Pancreas (tissue), 10 donors: ENCODE measurements at regions of chr20 and their contacts with region 1.

Region 1: GRCh38 chr20:45318948-45319347 is 10.8 kb upstream of the MATN4 start:
- DNase-seq: no peak
- ATAC-seq: peak in 3 of 4 donors; percentile 1 to 16 (median 4)
- H3K4me3 ChIP-seq: no peak overlapping the region
- H3K27ac ChIP-seq: peak overlapping the region in 2 of 4 donors; percentile 6 to 31
- H3K4me1 ChIP-seq: peaks cover 0 to 11% (median 0%) of the 10 kb centered on the region in 3 donors
- H3K27me3 ChIP-seq: no peaks in the 10 kb centered on the region
- CTCF ChIP-seq: no peak

Region 2: GRCh38 chr20:45362804-45363610 is 44.1 kb after region 1 on chr20 and contains the start of gene SYS1:
- intact Hi-C with region 1: no loop called
- DNase-seq: peak; percentile 99 to 100 (median 99)
- ATAC-seq: peak; percentile 84 to 91 (median 90)
- H3K4me3 ChIP-seq: peak within 1 kb of the TSS; percentile 56 to 71 (median 62)
- H3K27ac ChIP-seq: peak within 1 kb of the TSS; percentile 80 to 97 (median 92)
- H3K4me1 ChIP-seq: peaks cover 1 to 54% (median 12%) of the 10 kb centered on the region in 3 donors
- H3K27me3 ChIP-seq: no peaks in the 10 kb centered on the region
- CTCF ChIP-seq: peak; percentile 74 to 78 (median 76)
- total RNA-seq, gene SYS1: 11.1 to 19.0 (median 16.5) TPM

Region 3: GRCh38 chr20:45450097-45450818 is 131.3 kb after region 1 on chr20:
- intact Hi-C with region 1: loop called in 1 of 3 experiments (anchors 5 kb)
- DNase-seq: no peak
- ATAC-seq: peak; percentile 31 to 90 (median 82)
- H3K4me3 ChIP-seq: no peak overlapping the region
- H3K27ac ChIP-seq: no peak overlapping the region
- H3K4me1 ChIP-seq: no peaks in the 10 kb centered on the region
- H3K27me3 ChIP-seq: no peaks in the 10 kb centered on the region
- CTCF ChIP-seq: peak; percentile 38 to 56 (median 49)